ENCODE measurements at regions of chr1 and their contacts with region 1.

Region 1: GRCh38 chr1:113904674-113905434 is at the starts of genes AP4B1 and DCLRE1B:
- DNase-seq: peak; percentile 100
- ATAC-seq: peak; percentile 91
- H3K4me3 Mint-ChIP-seq: peak within 1 kb of the TSS; percentile 97
- H3K27ac Mint-ChIP-seq: peak within 1 kb of the TSS; percentile 96
- H3K4me1 Mint-ChIP-seq: peaks cover 64% of the 10 kb centered on the region
- H3K27me3 Mint-ChIP-seq: no peaks in the 10 kb centered on the region
- total RNA-seq, gene AP4B1: 42.9 to 44.9 TPM
- total RNA-seq, gene DCLRE1B: 19.6 to 19.7 TPM

Region 2: DNA sequence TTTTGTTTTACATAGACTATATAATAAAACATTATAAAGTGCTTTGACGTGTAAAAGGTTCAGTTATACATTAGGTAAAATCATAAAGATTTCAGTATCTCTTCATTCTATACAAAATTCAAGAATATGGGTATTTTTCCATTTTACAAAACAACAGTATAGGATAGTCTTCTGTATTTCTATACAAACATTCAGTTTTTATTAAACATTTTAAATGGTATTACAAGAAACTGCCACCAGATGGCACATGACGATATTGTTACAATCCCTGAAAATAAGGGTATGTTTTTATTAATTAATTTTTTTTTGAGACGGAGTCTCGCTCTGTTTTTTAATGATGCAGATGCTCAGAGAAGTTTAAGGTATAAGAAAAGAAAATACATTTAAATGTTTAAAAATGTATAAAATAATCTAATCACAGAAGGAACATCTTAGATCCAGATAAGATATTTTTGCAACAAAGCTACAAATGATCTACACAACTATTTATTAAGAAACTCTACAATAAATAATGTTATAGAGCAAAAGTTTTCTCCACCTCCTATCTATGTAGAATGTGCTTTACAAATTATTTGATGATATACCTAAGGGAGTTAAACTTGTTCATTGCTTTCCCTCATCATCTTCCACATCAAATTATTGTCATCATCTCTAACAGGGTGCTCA is 69.1 kb before region 1 on chr1:
- CTCF ChIA-PET with region 1: interaction called, 23 read pairs
- POLR2A ChIA-PET with region 1: interaction called, 3 read pairs
- DNase-seq: peak; percentile 41
- ATAC-seq: no peak
- H3K4me3 Mint-ChIP-seq: no peak overlapping the region
- H3K27ac Mint-ChIP-seq: no peak overlapping the region
- H3K4me1 Mint-ChIP-seq: peaks cover 5% of the 10 kb centered on the region
- H3K27me3 Mint-ChIP-seq: no peaks in the 10 kb centered on the region

Region 3: GRCh38 chr1:113871597-113872113 is 33.2 kb before region 1 on chr1 and contains the start of gene PTPN22:
- CTCF ChIA-PET with region 1: interaction called, 77 read pairs
- POLR2A ChIA-PET with region 1: interaction called, 43 read pairs
- DNase-seq: peak; percentile 91
- ATAC-seq: peak; percentile 87
- H3K4me3 Mint-ChIP-seq: peak within 1 kb of the TSS; percentile 84
- H3K27ac Mint-ChIP-seq: peak within 1 kb of the TSS; percentile 99
- H3K4me1 Mint-ChIP-seq: peaks cover 75% of the 10 kb centered on the region
- H3K27me3 Mint-ChIP-seq: no peaks in the 10 kb centered on the region
- total RNA-seq, gene PTPN22: 74.8 to 78.9 TPM

Region 4: GRCh38 chr1:113881661-113882060 is 23.2 kb before region 1 on chr1:
- CTCF ChIA-PET with region 1: interaction called, 33 read pairs
- POLR2A ChIA-PET with region 1: interaction called, 38 read pairs
- DNase-seq: no peak
- ATAC-seq: no peak
- H3K4me3 Mint-ChIP-seq: no peak overlapping the region
- H3K27ac Mint-ChIP-seq: no peak overlapping the region
- H3K4me1 Mint-ChIP-seq: peaks cover 42% of the 10 kb centered on the region
- H3K27me3 Mint-ChIP-seq: no peaks in the 10 kb centered on the region

Region 5: DNA sequence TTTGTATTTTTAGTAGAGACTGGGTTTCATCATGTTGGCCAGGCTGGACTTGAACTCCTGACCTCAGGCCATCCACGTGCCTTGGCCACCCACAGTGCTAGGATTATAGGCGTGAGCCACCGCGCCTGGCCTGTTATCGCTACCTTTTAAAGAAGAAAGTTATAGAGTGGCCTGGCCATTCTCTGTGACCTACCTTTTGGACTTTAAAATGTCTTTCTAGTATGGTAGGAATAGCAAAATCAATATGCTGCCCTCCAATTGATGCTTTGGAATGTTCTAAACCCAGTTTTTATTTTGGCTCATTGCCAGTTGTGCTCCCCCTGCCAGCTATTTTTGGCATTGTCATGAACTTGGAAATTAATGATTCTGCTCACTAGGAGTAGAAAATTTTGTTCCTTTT is 44.2 kb after region 1 on chr1:
- CTCF ChIA-PET with region 1: interaction called, 12 read pairs
- POLR2A ChIA-PET with region 1: interaction called, 3 read pairs
- DNase-seq: no peak
- ATAC-seq: no peak
- H3K4me3 Mint-ChIP-seq: no peak overlapping the region
- H3K27ac Mint-ChIP-seq: peak overlapping the region; percentile 36
- H3K4me1 Mint-ChIP-seq: peaks cover 59% of the 10 kb centered on the region
- H3K27me3 Mint-ChIP-seq: no peaks in the 10 kb centered on the region

Region 6: DNA sequence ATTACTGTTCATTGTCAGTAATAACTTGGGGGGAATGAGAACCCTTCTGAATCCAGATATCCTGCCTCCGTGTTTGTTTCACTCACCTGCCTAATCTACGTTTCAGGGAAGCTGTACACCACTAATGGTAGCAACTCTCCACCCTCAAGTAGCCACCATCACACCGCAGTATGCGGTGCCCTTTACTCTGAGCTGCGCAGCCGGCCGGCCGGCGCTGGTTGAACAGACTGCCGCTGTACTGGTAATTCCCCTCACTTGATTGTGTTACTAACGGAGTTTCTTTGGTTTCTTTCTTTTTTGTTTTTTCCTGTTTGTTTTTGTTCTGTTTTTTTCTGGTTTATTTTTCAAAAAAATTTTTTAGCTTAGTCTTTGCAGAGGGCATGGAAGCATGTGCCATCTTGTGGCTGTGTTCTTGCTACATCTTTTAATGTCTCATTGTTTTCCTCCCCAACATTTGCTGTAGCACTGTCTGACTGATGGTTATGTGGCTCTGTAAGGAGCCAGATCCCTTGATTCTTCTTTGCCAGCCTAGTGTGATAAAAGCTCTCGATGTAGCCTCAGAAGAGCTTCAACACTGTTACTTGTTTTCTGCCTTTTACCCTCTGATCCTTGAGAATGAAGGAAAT is 58.5 kb after region 1 on chr1:
- CTCF ChIA-PET with region 1: interaction called, 15 read pairs
- POLR2A ChIA-PET with region 1: no interaction called
- DNase-seq: no peak
- ATAC-seq: no peak
- H3K4me3 Mint-ChIP-seq: no peak overlapping the region
- H3K27ac Mint-ChIP-seq: no peak overlapping the region
- H3K4me1 Mint-ChIP-seq: peaks cover 6% of the 10 kb centered on the region
- H3K27me3 Mint-ChIP-seq: no peaks in the 10 kb centered on the region

Region 7: DNA sequence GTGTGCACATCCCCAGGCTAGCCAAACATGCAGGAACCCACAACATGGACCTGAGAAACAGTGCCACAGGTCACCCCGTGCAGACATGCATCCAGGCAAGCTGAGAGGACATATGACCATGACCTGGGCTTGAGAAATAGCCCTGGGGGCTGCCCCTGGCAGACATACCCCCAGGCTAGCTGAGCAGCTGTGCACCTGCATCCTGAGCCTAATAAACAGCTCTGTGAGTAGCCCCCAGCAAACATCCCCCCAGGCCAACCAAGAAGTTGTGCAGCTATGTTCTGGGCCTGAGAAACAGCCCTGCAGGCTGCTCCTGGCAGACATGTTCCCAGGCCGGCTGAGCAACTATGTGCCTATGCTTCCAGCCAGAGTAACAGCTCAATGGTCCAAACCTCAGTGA is 88.9 kb after region 1 on chr1:
- CTCF ChIA-PET with region 1: no interaction called
- POLR2A ChIA-PET with region 1: no interaction called
- DNase-seq: no peak
- ATAC-seq: no peak
- H3K4me3 Mint-ChIP-seq: no peak overlapping the region
- H3K27ac Mint-ChIP-seq: no peak overlapping the region
- H3K4me1 Mint-ChIP-seq: no peaks in the 10 kb centered on the region
- H3K27me3 Mint-ChIP-seq: peaks cover 9% of the 10 kb centered on the region

Measured in activated CD8-positive, alpha-beta T cell treated with anti-CD3 and anti-CD28 coated beads, Interleukin-2, amount 10 ng/mL, durations not matched to agents 7 days and 5 days (primary cell).